Right ventricle myocardium inferior (tissue), 1 donor: ENCODE measurements at regions of chr18 and their contacts with region 1.

Region 1: DNA sequence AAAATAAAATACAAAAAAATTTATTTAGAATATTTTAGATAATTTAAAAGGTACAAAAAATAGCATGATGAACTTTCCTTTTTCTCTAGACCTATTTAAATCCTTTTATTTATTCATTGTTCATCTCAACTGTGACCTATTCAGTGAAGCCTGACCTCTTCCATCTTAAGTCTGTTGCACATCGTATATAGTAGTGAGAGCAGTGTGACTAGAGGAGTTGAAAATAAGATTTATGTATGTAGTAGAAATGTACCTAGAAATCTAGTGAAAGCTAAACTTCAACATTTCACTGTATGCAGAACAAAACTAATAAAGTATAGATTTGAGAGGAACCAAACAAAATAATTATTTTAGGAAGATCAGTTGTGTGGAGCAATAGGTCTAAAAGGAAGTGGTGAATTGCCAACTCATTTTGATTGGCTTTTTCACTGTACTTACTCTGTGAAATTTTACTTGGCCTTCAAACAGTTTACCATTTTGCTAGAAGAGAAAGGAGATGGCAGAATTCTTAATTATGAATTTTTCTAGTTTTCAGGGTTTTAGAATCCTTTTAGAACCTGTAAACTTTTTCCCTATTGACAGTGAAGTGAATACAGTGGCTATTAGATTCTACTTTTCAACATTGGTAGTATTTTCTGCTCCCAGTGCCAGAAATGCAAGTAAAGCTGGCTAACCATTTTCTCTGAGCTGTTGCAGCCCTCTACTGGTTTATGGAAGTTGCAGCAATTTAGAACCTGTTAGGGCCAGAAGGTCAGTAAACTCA is 11.0 kb downstream of the ANKRD12 start:
- DNase-seq: no peak
- ATAC-seq: peak; percentile 76

Region 2: GRCh38 chr18:8899000-8899399 is 248.6 kb before region 1 on chr18:
- intact Hi-C with region 1: no loop called
- DNase-seq: no peak
- ATAC-seq: no peak

Region 3: GRCh38 chr18:9066817-9067306 is 80.8 kb before region 1 on chr18:
- intact Hi-C with region 1: loop called (anchors 2 kb)
- DNase-seq: no peak
- ATAC-seq: no peak

Region 4: GRCh38 chr18:9334329-9334972 is 186.8 kb after region 1 on chr18 and contains the start of gene TWSG1:
- intact Hi-C with region 1: no loop called
- DNase-seq: peak; percentile 97
- ATAC-seq: peak; percentile 99
- total RNA-seq, gene TWSG1: 9.8 TPM